Right ventricle myocardium superior (tissue), 1 donor: ENCODE measurements at regions of chr12 and their contacts with region 1.

Region 1: GRCh38 chr12:49866859-49867579 is 24.1 kb upstream of the BCDIN3D start:
- DNase-seq: peak; percentile 87
- ATAC-seq: peak; percentile 45

Region 2: DNA sequence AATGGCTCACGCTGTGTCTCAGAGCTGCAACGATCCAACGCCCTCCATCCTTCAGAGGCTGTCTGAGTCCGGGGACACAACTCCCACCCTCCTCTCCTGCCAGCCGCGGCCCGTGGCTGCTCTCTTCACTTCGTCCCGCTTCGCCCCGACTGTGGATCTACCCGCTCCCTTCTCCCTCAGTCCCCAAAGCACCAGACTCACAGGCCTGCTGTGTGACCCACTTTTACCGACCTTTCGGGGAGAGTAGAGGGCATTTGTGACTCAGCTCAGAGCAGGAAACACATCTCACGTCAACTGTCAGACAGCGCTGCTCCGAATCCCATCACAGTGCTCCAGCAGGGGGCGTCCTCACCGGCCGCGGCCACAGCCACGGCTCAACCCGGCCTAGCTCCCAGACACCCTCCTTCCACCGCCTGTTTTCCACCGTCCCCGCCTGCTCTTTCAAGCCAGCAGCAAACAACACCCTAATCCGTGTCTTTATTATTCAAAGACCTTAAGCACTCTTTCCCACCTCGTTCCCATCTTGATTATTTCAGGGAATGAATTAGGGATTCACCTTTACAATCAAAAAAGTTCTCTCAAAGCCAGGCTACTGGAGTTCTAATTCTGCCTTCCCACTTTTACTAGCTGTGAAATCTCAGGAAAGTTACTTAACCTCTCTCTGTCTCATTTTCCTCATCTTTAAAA is 78.5 kb after region 1 on chr12:
- intact Hi-C with region 1: loop called (anchors 10 kb)
- DNase-seq: peak; percentile 90
- ATAC-seq: peak; percentile 98

Region 3: GRCh38 chr12:50157259-50157658 is 290.2 kb after region 1 on chr12:
- intact Hi-C with region 1: no loop called
- DNase-seq: no peak
- ATAC-seq: no peak